PC-9 (cell line): ENCODE measurements at regions of chr1 and their contacts with region 1.

Region 1: DNA sequence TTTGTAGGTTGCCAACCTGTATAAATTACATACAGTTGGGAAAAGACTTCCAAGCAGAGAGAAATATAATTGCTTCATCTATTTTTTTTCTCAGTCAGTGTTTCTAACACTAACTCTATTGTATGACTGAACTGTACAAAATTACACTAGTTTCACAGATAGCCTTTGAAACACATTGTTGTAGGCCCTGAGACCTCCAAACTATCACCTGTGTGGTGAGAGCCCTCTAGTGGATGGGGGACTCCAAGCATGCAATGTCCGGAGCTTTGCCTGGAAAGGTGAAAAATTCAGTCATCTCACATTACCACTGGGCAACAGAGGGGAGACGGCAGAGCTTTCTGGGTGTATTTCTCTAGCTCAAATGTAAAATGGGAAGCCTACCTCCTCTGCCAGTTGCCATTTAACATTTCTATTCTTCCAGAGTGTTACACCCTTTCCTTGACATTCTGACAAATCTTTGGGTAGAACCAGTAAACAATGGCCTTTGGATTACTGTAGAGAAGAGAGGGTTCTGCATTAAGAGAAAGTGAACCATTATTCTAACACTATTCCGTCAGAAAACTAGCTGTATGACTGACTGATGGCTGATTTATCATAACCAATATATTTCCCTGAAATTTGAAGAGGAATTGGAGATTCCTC is 212.2 kb downstream of the LYPLAL1 start:
- DNase-seq: peak; percentile 43 to 63
- H3K4me3 ChIP-seq: no peak overlapping the region
- H3K27ac ChIP-seq: no peak overlapping the region
- H3K4me1 ChIP-seq: peaks cover 6% of the 10 kb centered on the region; the same call in 1 of the 2 replicates
- H3K27me3 ChIP-seq: no peaks in the 10 kb centered on the region
- CTCF ChIP-seq: peak; percentile 79

Region 2: GRCh38 chr1:217462159-217462558 is 1923.7 kb before region 1 on chr1:
- CTCF ChIA-PET with region 1: no interaction called
- POLR2A ChIA-PET with region 1: no interaction called
- intact Hi-C with region 1: no loop called
- DNase-seq: no peak
- H3K4me3 ChIP-seq: no peak overlapping the region
- H3K27ac ChIP-seq: no peak overlapping the region
- H3K4me1 ChIP-seq: no peaks in the 10 kb centered on the region
- H3K27me3 ChIP-seq: no peaks in the 10 kb centered on the region
- CTCF ChIP-seq: no peak

Region 3: GRCh38 chr1:219209578-219209977 is 176.3 kb before region 1 on chr1:
- CTCF ChIA-PET with region 1: interaction called, 3 read pairs
- POLR2A ChIA-PET with region 1: no interaction called
- intact Hi-C with region 1: loop called (anchors 1 kb)
- DNase-seq: no peak
- H3K4me3 ChIP-seq: no peak overlapping the region
- H3K27ac ChIP-seq: no peak overlapping the region
- H3K4me1 ChIP-seq: no peaks in the 10 kb centered on the region
- H3K27me3 ChIP-seq: no peaks in the 10 kb centered on the region
- CTCF ChIP-seq: no peak

Region 4: GRCh38 chr1:219247441-219247840 is 138.5 kb before region 1 on chr1:
- CTCF ChIA-PET with region 1: no interaction called
- POLR2A ChIA-PET with region 1: no interaction called
- intact Hi-C with region 1: no loop called
- DNase-seq: no peak
- H3K4me3 ChIP-seq: no peak overlapping the region
- H3K27ac ChIP-seq: no peak overlapping the region
- H3K4me1 ChIP-seq: no peaks in the 10 kb centered on the region
- H3K27me3 ChIP-seq: no peaks in the 10 kb centered on the region
- CTCF ChIP-seq: no peak

Region 5: GRCh38 chr1:219304227-219305226 is 81.4 kb before region 1 on chr1:
- CTCF ChIA-PET with region 1: no interaction called
- POLR2A ChIA-PET with region 1: no interaction called
- intact Hi-C with region 1: loop called (anchors 1 kb)
- DNase-seq: peak; percentile 37 to 49
- H3K4me3 ChIP-seq: no peak overlapping the region
- H3K27ac ChIP-seq: no peak overlapping the region
- H3K4me1 ChIP-seq: no peaks in the 10 kb centered on the region
- H3K27me3 ChIP-seq: no peaks in the 10 kb centered on the region
- CTCF ChIP-seq: peak; percentile 47; the same call in 1 of the 2 replicates

Region 6: GRCh38 chr1:219324629-219325367 is 61.1 kb before region 1 on chr1:
- CTCF ChIA-PET with region 1: no interaction called
- POLR2A ChIA-PET with region 1: no interaction called
- intact Hi-C with region 1: loop called (anchors 5 kb)
- DNase-seq: peak; percentile 44 to 94
- H3K4me3 ChIP-seq: no peak overlapping the region; the same call in 1 of the 2 replicates
- H3K27ac ChIP-seq: peak overlapping the region; percentile 63
- H3K4me1 ChIP-seq: peaks cover 31% of the 10 kb centered on the region
- H3K27me3 ChIP-seq: no peaks in the 10 kb centered on the region
- CTCF ChIP-seq: no peak